ENCODE measurements at regions of chr3 and their contacts with region 1.

Region 1: GRCh38 chr3:71064288-71064955 is 519.1 kb downstream of the FOXP1 start:
- DNase-seq: no peak
- H3K4me3 ChIP-seq: peak overlapping the region; percentile 56 to 83 (median 75)
- H3K27ac ChIP-seq: peak overlapping the region; percentile 94 to 99 (median 97)
- H3K4me1 ChIP-seq: peaks cover 35 to 86% (median 48%) of the 10 kb centered on the region in 3 donors
- H3K27me3 ChIP-seq: no peaks in the 10 kb centered on the region
- CTCF ChIP-seq: peak in 2 of 6 experiments; percentile 2 to 22
- POLR2A ChIP-seq: no peak

Region 2: GRCh38 chr3:70989174-70989573 is 75.2 kb before region 1 on chr3:
- intact Hi-C with region 1: no loop called
- DNase-seq: no peak
- H3K4me3 ChIP-seq: no peak overlapping the region
- H3K27ac ChIP-seq: peak overlapping the region; percentile 20 to 94 (median 78)
- H3K4me1 ChIP-seq: peaks cover 0 to 63% (median 13%) of the 10 kb centered on the region in 3 donors
- H3K27me3 ChIP-seq: no peaks in the 10 kb centered on the region
- CTCF ChIP-seq: peak in 1 of 6 experiments; percentile 17
- POLR2A ChIP-seq: no peak

Region 3: GRCh38 chr3:71006810-71007785 is 57.3 kb before region 1 on chr3:
- intact Hi-C with region 1: loop called (anchors 10 kb)
- DNase-seq: no peak
- H3K4me3 ChIP-seq: no peak overlapping the region
- H3K27ac ChIP-seq: peak overlapping the region; percentile 2 to 72 (median 51)
- H3K4me1 ChIP-seq: peaks cover 0 to 76% (median 19%) of the 10 kb centered on the region in 3 donors
- H3K27me3 ChIP-seq: no peaks in the 10 kb centered on the region
- CTCF ChIP-seq: peak in 5 of 6 experiments; percentile 21 to 57 (median 53)
- POLR2A ChIP-seq: no peak

Region 4: DNA sequence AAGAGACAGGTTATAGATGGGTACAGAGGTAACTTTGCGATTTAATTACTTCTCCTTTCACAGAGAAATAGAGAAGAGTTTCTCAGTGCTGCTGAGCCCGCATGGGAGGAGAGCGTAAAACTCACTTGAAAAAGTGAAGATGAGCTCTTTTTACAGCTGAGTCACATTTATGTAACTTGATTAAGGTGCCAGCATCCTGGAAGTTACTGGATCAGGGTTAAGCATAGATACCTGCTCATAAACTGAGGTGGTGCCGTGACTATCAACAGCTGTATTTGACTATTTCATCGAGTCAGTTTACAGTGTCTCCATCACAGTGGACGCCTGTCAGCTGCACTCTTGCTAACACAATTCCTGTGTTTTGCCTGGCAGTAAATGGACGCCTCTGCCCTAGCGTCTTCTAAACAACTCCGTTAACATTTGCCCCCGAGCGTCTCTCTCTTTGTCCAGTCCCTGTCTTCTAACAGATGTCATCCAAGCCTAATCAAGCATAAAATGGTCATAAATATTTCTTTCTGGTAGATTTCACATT is 104.5 kb after region 1 on chr3:
- intact Hi-C with region 1: no loop called
- DNase-seq: no peak
- H3K4me3 ChIP-seq: peak overlapping the region in 1 of 4 donors; percentile 5
- H3K27ac ChIP-seq: peak overlapping the region in 1 of 4 donors; percentile 17
- H3K4me1 ChIP-seq: peaks cover 0 to 8% (median 0%) of the 10 kb centered on the region in 3 donors
- H3K27me3 ChIP-seq: no peaks in the 10 kb centered on the region
- CTCF ChIP-seq: no peak
- POLR2A ChIP-seq: no peak

Measured in esophagus squamous epithelium (tissue), 5 donors.